ENCODE measurements at regions of chr5 and their contacts with region 1.

Region 1: GRCh38 chr5:150560401-150561193 is 52.7 kb downstream of the NDST1 start:
- DNase-seq: peak; percentile 68 to 93 (median 84)
- ATAC-seq: peak; percentile 97
- H3K4me3 ChIP-seq: no peak overlapping the region
- H3K4me3 Mint-ChIP-seq: no peak overlapping the region
- H3K27ac ChIP-seq: no peak overlapping the region
- H3K27ac Mint-ChIP-seq: no peak overlapping the region
- H3K4me1 ChIP-seq: no peaks in the 10 kb centered on the region
- H3K4me1 Mint-ChIP-seq: no peaks in the 10 kb centered on the region
- H3K27me3 ChIP-seq: no peaks in the 10 kb centered on the region
- H3K27me3 Mint-ChIP-seq: peaks cover 3% of the 10 kb centered on the region
- CTCF ChIP-seq: peak; percentile 92

Region 2: GRCh38 chr5:150573867-150574817 is 13.5 kb after region 1 on chr5:
- CTCF ChIA-PET with region 1: interaction called, 14 read pairs
- POLR2A ChIA-PET with region 1: no interaction called
- intact Hi-C with region 1: no loop called
- DNase-seq: no peak
- ATAC-seq: no peak
- H3K4me3 ChIP-seq: no peak overlapping the region
- H3K4me3 Mint-ChIP-seq: no peak overlapping the region
- H3K27ac ChIP-seq: no peak overlapping the region
- H3K27ac Mint-ChIP-seq: no peak overlapping the region
- H3K4me1 ChIP-seq: no peaks in the 10 kb centered on the region
- H3K4me1 Mint-ChIP-seq: no peaks in the 10 kb centered on the region
- H3K27me3 ChIP-seq: no peaks in the 10 kb centered on the region
- H3K27me3 Mint-ChIP-seq: no peaks in the 10 kb centered on the region
- CTCF ChIP-seq: no peak

Region 3: DNA sequence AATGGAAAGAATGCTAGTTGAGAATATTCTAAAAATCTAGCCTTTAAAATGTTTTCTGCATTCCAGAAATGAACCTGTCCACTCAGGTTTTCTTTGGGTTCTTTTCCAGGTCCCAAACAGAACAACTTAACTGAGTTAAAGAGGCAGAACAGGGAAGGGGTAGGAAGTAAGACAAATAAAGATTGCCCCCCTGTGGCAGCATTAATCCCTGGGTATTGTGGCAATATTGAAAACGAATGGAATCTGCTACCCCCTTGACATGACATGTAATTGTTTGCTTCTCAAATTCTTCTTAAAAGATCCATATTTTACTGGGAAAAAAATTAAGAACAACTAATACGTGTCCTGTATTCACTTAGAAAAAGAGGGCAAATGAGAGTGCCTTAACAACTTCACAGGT is 149.6 kb after region 1 on chr5:
- CTCF ChIA-PET with region 1: interaction called, 5 read pairs
- POLR2A ChIA-PET with region 1: no interaction called
- intact Hi-C with region 1: loop called in 1 of 2 experiments (anchors 5 kb)
- DNase-seq: peak in 2 of 9 experiments; percentile 22 to 33
- ATAC-seq: no peak
- H3K4me3 ChIP-seq: no peak overlapping the region
- H3K4me3 Mint-ChIP-seq: no peak overlapping the region
- H3K27ac ChIP-seq: no peak overlapping the region
- H3K27ac Mint-ChIP-seq: no peak overlapping the region
- H3K4me1 ChIP-seq: no peaks in the 10 kb centered on the region
- H3K4me1 Mint-ChIP-seq: no peaks in the 10 kb centered on the region
- H3K27me3 ChIP-seq: no peaks in the 10 kb centered on the region
- H3K27me3 Mint-ChIP-seq: no peaks in the 10 kb centered on the region
- CTCF ChIP-seq: peak; percentile 39